H1 (cell line): ENCODE measurements at regions of chr6 and their contacts with region 1.

Region 1: DNA sequence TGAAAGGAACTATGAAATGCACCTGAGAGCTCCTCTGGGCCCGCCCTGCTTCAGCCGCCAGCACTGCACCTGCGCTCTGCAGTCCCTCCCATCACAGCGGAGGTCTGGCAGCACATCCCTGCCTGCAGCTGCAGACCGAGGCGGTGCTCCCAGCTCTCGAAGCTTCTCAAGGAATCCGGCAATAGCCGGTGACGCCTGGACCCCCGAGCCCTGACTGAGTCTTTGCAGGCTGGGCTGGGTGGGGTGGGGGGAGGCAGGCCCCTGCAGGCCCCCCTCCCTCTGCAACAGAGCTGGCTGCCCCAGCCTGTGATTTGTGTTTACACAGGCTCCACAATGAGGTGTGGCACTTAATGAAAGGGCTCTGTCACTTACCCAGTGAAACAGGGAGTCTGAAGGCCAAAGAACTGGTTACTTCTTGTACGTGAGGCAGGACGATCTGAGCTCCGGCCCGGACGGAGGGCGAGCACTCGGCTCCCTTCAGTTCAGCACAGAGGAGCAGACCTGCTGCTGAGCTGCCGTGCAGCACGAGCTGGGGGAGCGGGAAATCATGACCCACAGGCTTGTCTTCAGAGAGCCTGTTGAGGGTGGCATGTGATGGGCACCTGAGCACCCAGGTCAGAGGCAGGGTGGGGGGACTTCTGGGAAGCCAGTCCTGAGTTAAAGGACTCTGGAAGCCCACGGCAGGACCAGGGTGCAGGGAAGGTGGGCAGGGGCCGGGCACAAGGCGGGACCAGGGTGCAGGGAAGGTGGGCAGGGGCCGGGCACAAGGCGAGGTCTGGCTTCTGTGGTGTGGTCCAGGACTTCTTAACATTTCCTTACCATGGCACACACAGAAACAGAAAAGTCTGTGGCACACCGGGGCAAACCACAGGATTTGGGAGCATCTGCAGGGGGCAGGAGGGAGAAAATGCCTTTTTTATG is 192.3 kb upstream of the THBS2 start:
- DNase-seq: no peak
- H3K4me3 ChIP-seq: no peak overlapping the region
- H3K27ac ChIP-seq: no peak overlapping the region
- H3K4me1 ChIP-seq: peaks cover 0 to 4% (median 1%) of the 10 kb centered on the region in 4 experiments; a peak in 1 of 7 replicates
- H3K27me3 ChIP-seq: no peaks in the 10 kb centered on the region
- CTCF ChIP-seq: no peak
- EP300 ChIP-seq: no peak
- POLR2A ChIP-seq: no peak
- RAD21 ChIP-seq: no peak

Region 2: GRCh38 chr6:169398342-169399105 is 47.4 kb before region 1 on chr6:
- CTCF ChIA-PET with region 1: no interaction called
- POLR2A ChIA-PET with region 1: no interaction called
- DNase-seq: no peak
- H3K4me3 ChIP-seq: no peak overlapping the region
- H3K27ac ChIP-seq: no peak overlapping the region
- H3K4me1 ChIP-seq: no peaks in the 10 kb centered on the region
- H3K27me3 ChIP-seq: no peaks in the 10 kb centered on the region
- CTCF ChIP-seq: no peak
- EP300 ChIP-seq: no peak
- POLR2A ChIP-seq: no peak
- RAD21 ChIP-seq: no peak

Region 3: DNA sequence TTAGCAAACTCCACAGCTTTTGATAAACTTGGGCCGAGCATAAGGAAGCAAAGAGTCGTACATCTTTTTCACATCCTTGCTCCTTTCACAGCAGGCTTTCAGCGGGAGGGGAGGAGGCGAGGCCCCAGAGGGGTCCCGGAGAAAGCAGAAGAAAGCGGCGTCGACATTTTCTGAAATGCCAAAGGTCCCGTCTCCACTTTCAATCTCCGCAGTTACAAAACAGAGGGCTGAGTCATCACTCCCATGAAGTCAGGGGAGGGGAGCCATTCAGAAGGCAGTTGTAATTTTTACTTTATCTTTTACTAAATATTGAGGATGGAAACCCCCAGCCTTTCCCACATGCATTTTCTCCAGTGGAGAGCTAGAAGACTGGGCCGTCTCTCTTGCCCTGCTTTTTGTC is 18.1 kb before region 1 on chr6:
- CTCF ChIA-PET with region 1: interaction called, 12 read pairs
- POLR2A ChIA-PET with region 1: interaction called, 3 read pairs
- DNase-seq: no peak
- H3K4me3 ChIP-seq: peak overlapping the region in 1 of 4 experiments; percentile 9; a peak in 1 of 8 replicates
- H3K27ac ChIP-seq: no peak overlapping the region
- H3K4me1 ChIP-seq: peaks cover 0 to 15% (median 5%) of the 10 kb centered on the region in 4 experiments; a peak in 6 of 7 replicates
- H3K27me3 ChIP-seq: peaks cover 0 to 4% (median 1%) of the 10 kb centered on the region in 4 experiments; a peak in 4 of 7 replicates
- CTCF ChIP-seq: no peak
- EP300 ChIP-seq: no peak
- POLR2A ChIP-seq: no peak
- RAD21 ChIP-seq: no peak